ENCODE measurements at regions of chr3 and their contacts with region 1.

Region 1: GRCh38 chr3:30600572-30600971 is 5.8 kb upstream of the TGFBR2 start:
- DNase-seq: no peak
- ATAC-seq: no peak
- H3K4me3 ChIP-seq: no peak overlapping the region
- H3K4me3 Mint-ChIP-seq: no peak overlapping the region
- H3K27ac ChIP-seq: no peak overlapping the region
- H3K27ac Mint-ChIP-seq: peak overlapping the region in 1 of 2 donors; percentile 34
- H3K4me1 ChIP-seq: peaks cover 20 to 47% of the 10 kb centered on the region in 2 experiments
- H3K4me1 Mint-ChIP-seq: peaks cover 60 to 67% (median 67%) of the 10 kb centered on the region in 3 donors
- H3K27me3 ChIP-seq: no peaks in the 10 kb centered on the region
- H3K27me3 Mint-ChIP-seq: no peaks in the 10 kb centered on the region

Region 2: GRCh38 chr3:30634761-30635735 is 34.5 kb after region 1 on chr3:
- CTCF ChIA-PET with region 1: interaction called in 1 of 2 experiments, 15 read pairs
- POLR2A ChIA-PET with region 1: interaction called in 1 of 2 experiments, 4 read pairs
- DNase-seq: peak in 1 of 35 experiments; percentile 38
- ATAC-seq: peak in 2 of 4 experiments; percentile 20 to 34
- H3K4me3 ChIP-seq: no peak overlapping the region
- H3K4me3 Mint-ChIP-seq: peak overlapping the region; percentile 34 to 60 (median 56)
- H3K27ac ChIP-seq: peak overlapping the region; percentile 92
- H3K27ac Mint-ChIP-seq: peak overlapping the region; percentile 93 to 98
- H3K4me1 ChIP-seq: peaks cover 61 to 89% of the 10 kb centered on the region in 2 experiments
- H3K4me1 Mint-ChIP-seq: peaks cover 96 to 99% (median 98%) of the 10 kb centered on the region in 3 donors
- H3K27me3 ChIP-seq: no peaks in the 10 kb centered on the region
- H3K27me3 Mint-ChIP-seq: no peaks in the 10 kb centered on the region

Region 3: GRCh38 chr3:30668155-30668554 is 67.6 kb after region 1 on chr3:
- CTCF ChIA-PET with region 1: interaction called, 4 read pairs
- POLR2A ChIA-PET with region 1: interaction called in 1 of 2 experiments, 15 read pairs
- DNase-seq: no peak
- ATAC-seq: no peak
- H3K4me3 ChIP-seq: no peak overlapping the region
- H3K4me3 Mint-ChIP-seq: peak overlapping the region in 1 of 3 donors; percentile 35
- H3K27ac ChIP-seq: peak overlapping the region; percentile 9
- H3K27ac Mint-ChIP-seq: peak overlapping the region; percentile 78 to 95
- H3K4me1 ChIP-seq: peaks cover 66 to 78% of the 10 kb centered on the region in 2 experiments
- H3K4me1 Mint-ChIP-seq: peaks cover 97 to 100% (median 99%) of the 10 kb centered on the region in 3 donors
- H3K27me3 ChIP-seq: no peaks in the 10 kb centered on the region
- H3K27me3 Mint-ChIP-seq: no peaks in the 10 kb centered on the region

Region 4: GRCh38 chr3:30810625-30811024 is 210.1 kb after region 1 on chr3:
- CTCF ChIA-PET with region 1: no interaction called
- POLR2A ChIA-PET with region 1: no interaction called
- DNase-seq: peak in 18 of 35 experiments; percentile 0 to 44 (median 9)
- ATAC-seq: peak in 3 of 4 experiments; percentile 33 to 81 (median 37)
- H3K4me3 ChIP-seq: no peak overlapping the region
- H3K4me3 Mint-ChIP-seq: peak overlapping the region in 1 of 3 donors; percentile 4
- H3K27ac ChIP-seq: no peak overlapping the region
- H3K27ac Mint-ChIP-seq: peak overlapping the region in 1 of 2 donors; percentile 37
- H3K4me1 ChIP-seq: no peaks in the 10 kb centered on the region
- H3K4me1 Mint-ChIP-seq: peaks cover 6 to 8% (median 8%) of the 10 kb centered on the region in 3 donors
- H3K27me3 ChIP-seq: no peaks in the 10 kb centered on the region
- H3K27me3 Mint-ChIP-seq: peaks cover 5 to 7% of the 10 kb centered on the region in 2 donors

Measured in T-cell (primary cell).